T-cell (primary cell): ENCODE measurements at regions of chrX and their contacts with region 1.

Region 1: GRCh38 chrX:42096265-42096920 is 173.0 kb upstream of the CASK start:
- DNase-seq: no peak
- ATAC-seq: no peak
- H3K4me3 ChIP-seq: no peak overlapping the region
- H3K4me3 Mint-ChIP-seq: no peak overlapping the region
- H3K27ac ChIP-seq: no peak overlapping the region
- H3K27ac Mint-ChIP-seq: no peak overlapping the region
- H3K4me1 ChIP-seq: peaks cover 0 to 3% of the 10 kb centered on the region in 2 experiments
- H3K4me1 Mint-ChIP-seq: peaks cover 7 to 11% (median 8%) of the 10 kb centered on the region in 3 donors
- H3K27me3 ChIP-seq: no peaks in the 10 kb centered on the region
- H3K27me3 Mint-ChIP-seq: peaks cover 0 to 15% of the 10 kb centered on the region in 2 donors

Region 2: GRCh38 chrX:42128020-42128419 is 31.6 kb after region 1 on chrX:
- CTCF ChIA-PET with region 1: no interaction called
- POLR2A ChIA-PET with region 1: no interaction called
- DNase-seq: peak in 1 of 35 experiments; percentile 19
- ATAC-seq: peak; percentile 34 to 70 (median 68)
- H3K4me3 ChIP-seq: no peak overlapping the region
- H3K4me3 Mint-ChIP-seq: peak overlapping the region; percentile 1 to 39 (median 4)
- H3K27ac ChIP-seq: peak overlapping the region; percentile 64
- H3K27ac Mint-ChIP-seq: peak overlapping the region; percentile 47 to 79
- H3K4me1 ChIP-seq: peaks cover 0 to 7% of the 10 kb centered on the region in 2 experiments
- H3K4me1 Mint-ChIP-seq: peaks cover 31 to 54% (median 45%) of the 10 kb centered on the region in 3 donors
- H3K27me3 ChIP-seq: no peaks in the 10 kb centered on the region
- H3K27me3 Mint-ChIP-seq: peaks cover 0 to 11% of the 10 kb centered on the region in 2 donors

Region 3: GRCh38 chrX:43269201-43269600 is 1172.8 kb after region 1 on chrX:
- CTCF ChIA-PET with region 1: no interaction called
- POLR2A ChIA-PET with region 1: interaction called in 1 of 2 experiments, 19 read pairs
- DNase-seq: no peak
- ATAC-seq: no peak
- H3K4me3 ChIP-seq: no peak overlapping the region
- H3K4me3 Mint-ChIP-seq: no peak overlapping the region
- H3K27ac ChIP-seq: no peak overlapping the region
- H3K27ac Mint-ChIP-seq: no peak overlapping the region
- H3K4me1 ChIP-seq: no peaks in the 10 kb centered on the region
- H3K4me1 Mint-ChIP-seq: no peaks in the 10 kb centered on the region
- H3K27me3 ChIP-seq: no peaks in the 10 kb centered on the region
- H3K27me3 Mint-ChIP-seq: peaks cover 0 to 7% of the 10 kb centered on the region in 2 donors